Transverse colon (tissue), 4 donors: ENCODE measurements at regions of chr10 and their contacts with region 1.

Region 1: DNA sequence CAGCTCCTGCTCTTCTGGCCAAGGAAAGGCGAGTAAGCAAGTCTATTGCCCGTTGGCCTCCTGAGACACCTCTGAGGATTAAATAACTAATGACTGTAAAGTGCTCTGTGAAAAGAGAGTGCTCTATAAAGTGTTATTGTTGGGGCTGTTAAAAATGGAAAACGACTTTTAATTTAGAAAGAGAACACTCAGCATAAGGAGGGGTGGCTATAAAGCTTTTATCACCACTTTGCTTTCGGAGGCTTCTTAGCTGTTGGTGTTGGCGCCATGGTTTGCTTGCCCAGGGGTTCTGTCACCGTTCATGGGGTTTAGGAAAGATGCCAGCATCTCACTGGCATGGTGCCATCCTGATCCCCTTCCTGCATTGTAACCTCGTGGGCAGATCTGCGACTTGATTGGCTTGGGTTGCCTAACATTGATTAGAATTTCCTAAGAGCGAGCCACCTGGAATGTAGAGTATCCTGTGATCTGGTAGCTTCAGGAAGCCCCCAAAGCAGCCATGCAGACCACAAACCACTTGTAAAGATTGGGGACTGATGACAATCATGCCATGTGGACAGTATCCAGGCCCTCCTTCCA is 509.9 kb downstream of the LRMDA start:
- DNase-seq: no peak
- H3K4me3 ChIP-seq: no peak overlapping the region
- H3K27ac ChIP-seq: no peak overlapping the region
- H3K4me1 ChIP-seq: no peaks in the 10 kb centered on the region
- H3K27me3 ChIP-seq: no peaks in the 10 kb centered on the region
- CTCF ChIP-seq: no peak
- EP300 ChIP-seq: no peak
- POLR2A ChIP-seq: no peak

Region 2: GRCh38 chr10:75959209-75959608 is 17.9 kb after region 1 on chr10:
- in situ Hi-C with region 1: no loop called
- intact Hi-C with region 1: loop called (anchors 1 kb)
- DNase-seq: no peak
- H3K4me3 ChIP-seq: no peak overlapping the region
- H3K27ac ChIP-seq: no peak overlapping the region
- H3K4me1 ChIP-seq: no peaks in the 10 kb centered on the region
- H3K27me3 ChIP-seq: no peaks in the 10 kb centered on the region
- CTCF ChIP-seq: no peak
- EP300 ChIP-seq: no peak
- POLR2A ChIP-seq: no peak

Region 3: DNA sequence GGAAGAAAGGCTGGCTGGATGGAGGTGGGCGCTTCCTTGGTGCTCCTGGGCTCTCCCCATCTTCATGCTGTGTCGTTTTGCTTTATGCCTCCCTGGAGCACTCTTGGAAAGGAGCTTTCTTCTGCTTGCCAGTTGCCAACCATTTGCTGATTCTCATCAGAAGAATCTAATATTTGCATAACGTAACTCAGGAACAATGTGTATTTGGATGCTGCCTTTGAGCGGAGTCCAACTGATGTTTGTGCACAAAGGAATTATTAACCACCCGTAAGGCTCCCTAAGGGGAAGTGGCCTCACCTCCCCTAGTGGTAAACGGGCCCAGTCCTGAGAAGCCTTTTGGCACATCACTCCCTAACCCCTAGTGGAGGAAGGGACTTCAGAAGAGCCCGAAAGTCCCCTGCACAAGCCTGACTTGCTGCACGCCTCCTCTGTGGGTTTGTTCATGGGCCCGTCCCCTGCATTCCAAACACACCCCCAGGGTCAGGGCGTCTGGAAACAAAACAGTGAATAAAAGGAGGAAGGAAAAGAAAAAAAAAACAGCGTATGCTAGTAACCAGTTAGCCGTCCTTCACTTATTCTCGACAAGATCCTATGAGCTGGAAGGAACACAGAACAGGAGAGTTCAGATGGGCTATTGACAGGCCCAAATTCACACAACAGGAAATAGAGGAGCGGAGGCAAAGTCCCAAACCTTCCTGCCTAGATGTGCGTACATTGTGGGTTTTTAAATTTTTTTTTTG is 92.3 kb after region 1 on chr10:
- in situ Hi-C with region 1: no loop called
- intact Hi-C with region 1: no loop called
- DNase-seq: no peak
- H3K4me3 ChIP-seq: no peak overlapping the region
- H3K27ac ChIP-seq: no peak overlapping the region
- H3K4me1 ChIP-seq: peaks cover 0 to 40% (median 12%) of the 10 kb centered on the region in 4 donors
- H3K27me3 ChIP-seq: no peaks in the 10 kb centered on the region
- CTCF ChIP-seq: peak in 1 of 5 experiments; percentile 8
- EP300 ChIP-seq: no peak
- POLR2A ChIP-seq: no peak

Region 4: GRCh38 chr10:76071653-76072365 is 130.5 kb after region 1 on chr10:
- in situ Hi-C with region 1: no loop called
- intact Hi-C with region 1: no loop called
- DNase-seq: no peak
- H3K4me3 ChIP-seq: no peak overlapping the region
- H3K27ac ChIP-seq: peak overlapping the region in 1 of 4 donors; percentile 33
- H3K4me1 ChIP-seq: peaks cover 0 to 18% (median 5%) of the 10 kb centered on the region in 4 donors
- H3K27me3 ChIP-seq: no peaks in the 10 kb centered on the region
- CTCF ChIP-seq: no peak
- EP300 ChIP-seq: no peak
- POLR2A ChIP-seq: no peak